PC-3 (cell line): ENCODE measurements at regions of chr2 and their contacts with region 1.

Region 1: DNA sequence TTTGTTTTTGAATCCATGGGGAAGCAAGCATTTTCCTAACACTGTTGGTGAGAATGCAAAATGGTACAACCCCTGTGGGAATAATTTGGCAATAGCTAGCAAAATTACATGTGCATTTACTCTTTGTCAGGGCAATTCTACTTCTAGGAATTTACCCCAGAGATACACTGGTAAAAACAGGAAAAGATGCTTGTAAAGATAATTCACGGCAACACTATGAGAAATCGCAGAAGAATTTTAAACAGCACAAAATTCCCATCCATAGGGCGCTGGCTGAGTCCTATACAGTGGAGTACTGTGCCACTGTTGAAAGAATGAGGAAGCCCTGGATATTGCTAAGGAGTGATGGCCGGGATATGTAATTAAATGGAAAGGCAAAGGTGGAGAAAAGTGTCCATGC is 75.8 kb downstream of the DGKD start:
- DNase-seq: peak; percentile 91
- ATAC-seq: peak; percentile 94
- H3K4me3 ChIP-seq: no peak overlapping the region
- H3K27ac ChIP-seq: peak overlapping the region; percentile 83
- H3K4me1 ChIP-seq: peaks cover 54% of the 10 kb centered on the region
- H3K27me3 ChIP-seq: no peaks in the 10 kb centered on the region
- CTCF ChIP-seq: no peak

Region 2: DNA sequence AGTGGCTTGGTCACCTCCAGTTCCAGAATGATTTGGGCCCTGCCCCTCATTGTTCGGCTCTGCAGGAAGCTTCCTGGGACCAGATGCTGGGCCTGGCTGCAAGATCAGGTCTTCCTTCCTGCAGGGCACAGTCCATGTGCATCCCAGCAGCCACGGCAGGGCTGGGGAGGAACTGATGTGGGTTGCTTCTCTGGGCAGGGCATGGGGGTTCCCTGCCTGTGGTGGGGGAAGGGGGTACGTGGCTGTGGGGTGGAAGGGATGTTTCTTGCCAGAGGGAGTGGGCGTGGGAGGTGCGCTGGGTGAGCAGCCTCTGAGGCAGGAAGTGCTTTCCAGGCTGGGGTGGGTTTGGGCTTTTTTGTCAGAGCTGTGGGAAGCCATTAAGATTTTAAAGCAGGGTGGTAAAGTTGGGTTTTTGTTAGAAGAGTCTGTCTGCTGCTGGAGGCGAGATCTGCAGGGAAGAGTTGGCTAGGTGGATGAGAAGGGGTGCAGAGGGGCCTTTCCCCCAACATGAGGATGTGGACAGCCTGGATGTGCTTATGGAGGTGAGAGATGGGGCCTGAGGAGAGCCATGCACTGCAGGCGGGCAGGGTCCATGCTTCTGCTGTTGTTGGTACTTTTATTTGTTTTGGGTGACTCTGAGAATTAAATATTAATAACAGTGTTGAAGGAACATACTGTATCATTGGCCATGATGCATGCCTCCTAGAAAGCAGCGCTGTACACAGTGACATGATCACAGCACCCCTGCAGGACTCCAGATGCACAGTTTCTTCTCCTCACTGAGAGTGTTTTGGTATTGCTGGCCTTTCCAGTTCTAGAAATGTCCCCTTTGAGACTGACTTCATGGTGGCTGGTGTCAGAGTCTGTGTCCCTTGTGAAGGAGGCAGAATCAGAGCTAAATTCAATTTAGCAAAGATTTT is 30.5 kb before region 1 on chr2:
- CTCF ChIA-PET with region 1: no interaction called
- POLR2A ChIA-PET with region 1: no interaction called
- intact Hi-C with region 1: no loop called
- DNase-seq: no peak
- ATAC-seq: no peak
- H3K4me3 ChIP-seq: no peak overlapping the region
- H3K27ac ChIP-seq: no peak overlapping the region
- H3K4me1 ChIP-seq: no peaks in the 10 kb centered on the region
- H3K27me3 ChIP-seq: no peaks in the 10 kb centered on the region
- CTCF ChIP-seq: no peak

Region 3: DNA sequence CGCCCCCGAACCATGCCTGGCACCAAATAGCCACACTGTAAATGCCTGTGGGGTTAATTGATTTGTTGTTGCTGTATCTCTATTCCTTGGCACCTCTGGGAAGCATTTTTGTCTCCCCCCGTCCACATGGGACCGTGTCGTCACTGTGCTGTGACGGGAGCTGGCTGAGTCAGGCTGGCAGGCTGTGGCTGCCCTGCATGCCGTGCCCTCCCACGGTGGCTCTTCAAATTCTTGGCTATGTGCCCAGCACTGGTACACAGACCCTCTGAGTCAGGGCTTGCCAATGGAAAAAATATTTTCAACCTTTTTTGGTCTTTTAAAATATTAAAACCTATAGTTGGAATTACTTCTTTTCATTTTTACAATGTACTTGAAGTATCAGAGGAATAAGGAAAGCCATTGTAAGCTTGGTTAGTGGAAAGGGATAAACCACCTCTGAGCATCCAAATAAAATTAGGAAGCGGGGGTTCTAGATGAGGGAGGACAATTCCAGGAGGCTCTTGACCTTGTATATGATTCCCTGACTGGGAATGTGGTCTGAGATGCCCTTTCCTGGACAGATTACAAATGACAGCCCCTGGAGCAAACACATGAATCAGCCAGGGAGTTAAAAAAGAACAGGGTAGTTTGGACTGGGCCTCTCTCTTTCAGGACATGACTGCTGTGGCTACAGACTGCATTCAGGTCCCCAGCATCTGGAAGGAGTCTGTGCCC is 16.4 kb before region 1 on chr2:
- CTCF ChIA-PET with region 1: no interaction called
- POLR2A ChIA-PET with region 1: interaction called, 3 read pairs
- intact Hi-C with region 1: loop called (anchors 1 kb)
- DNase-seq: peak; percentile 96
- ATAC-seq: peak; percentile 55
- H3K4me3 ChIP-seq: peak overlapping the region; percentile 46; the same call in 1 of the 2 replicates
- H3K27ac ChIP-seq: peak overlapping the region; percentile 98
- H3K4me1 ChIP-seq: peaks cover 57% of the 10 kb centered on the region
- H3K27me3 ChIP-seq: no peaks in the 10 kb centered on the region
- CTCF ChIP-seq: no peak